Breast epithelium (tissue), 4 donors: ENCODE measurements at regions of chr15 and their contacts with region 1.

Region 1: DNA sequence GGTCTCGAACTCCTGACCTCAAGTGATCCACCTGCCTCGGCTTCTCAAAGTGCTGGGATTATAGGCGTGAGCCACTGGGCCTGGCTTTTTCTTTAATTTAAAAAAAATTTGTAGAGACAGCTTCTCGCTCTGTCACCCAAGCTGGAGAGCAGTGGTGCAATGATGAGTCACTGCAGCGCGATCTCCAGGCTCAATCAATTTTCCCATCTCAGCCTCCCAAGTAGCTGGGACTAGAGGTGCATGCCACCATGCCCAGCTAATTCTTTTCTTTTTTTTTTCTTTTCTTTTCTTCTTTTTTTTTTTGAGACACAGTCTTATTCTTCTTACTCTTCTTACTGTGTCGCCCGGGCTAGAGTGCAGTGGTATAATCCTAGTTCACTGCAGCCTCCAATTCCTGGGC is 19.8 kb downstream of the TUBGCP4 start:
- DNase-seq: no peak
- H3K4me3 ChIP-seq: no peak overlapping the region
- H3K27ac ChIP-seq: no peak overlapping the region
- H3K4me1 ChIP-seq: no peaks in the 10 kb centered on the region
- H3K27me3 ChIP-seq: no peaks in the 10 kb centered on the region
- CTCF ChIP-seq: no peak
- POLR2A ChIP-seq: no peak

Region 2: DNA sequence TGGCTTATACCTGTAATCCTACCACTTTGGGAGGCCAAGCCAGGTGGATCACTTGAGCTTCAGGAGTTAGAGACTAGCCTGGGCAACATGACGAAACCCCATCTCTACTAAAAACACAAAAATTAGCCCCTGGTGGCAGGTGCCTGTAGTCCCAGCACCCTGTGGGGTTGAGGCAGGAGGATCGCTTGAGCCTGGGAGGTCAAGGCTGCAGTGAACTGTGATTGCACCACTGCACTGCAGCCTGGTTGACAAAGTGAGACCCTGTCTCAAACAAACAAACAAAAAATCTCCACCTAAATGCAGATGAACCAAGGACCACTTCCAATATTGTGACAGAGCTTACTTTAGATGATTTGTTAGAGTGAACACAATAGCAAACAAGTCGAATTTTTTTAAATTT is 48.5 kb after region 1 on chr15:
- intact Hi-C with region 1: loop called (anchors 2 kb)
- DNase-seq: no peak
- H3K4me3 ChIP-seq: no peak overlapping the region
- H3K27ac ChIP-seq: no peak overlapping the region
- H3K4me1 ChIP-seq: no peaks in the 10 kb centered on the region
- H3K27me3 ChIP-seq: no peaks in the 10 kb centered on the region
- CTCF ChIP-seq: no peak
- POLR2A ChIP-seq: no peak